Activated CD4-positive, alpha-beta T cell treated with anti-CD3 and anti-CD28 coated beads, Interleukin-2, amount 10 ng/mL, durations not matched to agents 24 days and 14 days (primary cell): ENCODE measurements at regions of chr1 and their contacts with region 1.

Region 1: GRCh38 chr1:211323156-211324063 is 3.2 kb upstream of the TRAF5 start:
- DNase-seq: peak; percentile 91
- H3K4me3 Mint-ChIP-seq: peak overlapping the region; percentile 15
- H3K27ac Mint-ChIP-seq: peak overlapping the region; percentile 88
- H3K4me1 Mint-ChIP-seq: peaks cover 57% of the 10 kb centered on the region
- H3K27me3 Mint-ChIP-seq: no peaks in the 10 kb centered on the region

Region 2: GRCh38 chr1:211198111-211198510 is 125.3 kb before region 1 on chr1:
- intact Hi-C with region 1: no loop called
- DNase-seq: no peak
- H3K4me3 Mint-ChIP-seq: no peak overlapping the region
- H3K27ac Mint-ChIP-seq: no peak overlapping the region
- H3K4me1 Mint-ChIP-seq: no peaks in the 10 kb centered on the region
- H3K27me3 Mint-ChIP-seq: peaks cover 7% of the 10 kb centered on the region

Region 3: DNA sequence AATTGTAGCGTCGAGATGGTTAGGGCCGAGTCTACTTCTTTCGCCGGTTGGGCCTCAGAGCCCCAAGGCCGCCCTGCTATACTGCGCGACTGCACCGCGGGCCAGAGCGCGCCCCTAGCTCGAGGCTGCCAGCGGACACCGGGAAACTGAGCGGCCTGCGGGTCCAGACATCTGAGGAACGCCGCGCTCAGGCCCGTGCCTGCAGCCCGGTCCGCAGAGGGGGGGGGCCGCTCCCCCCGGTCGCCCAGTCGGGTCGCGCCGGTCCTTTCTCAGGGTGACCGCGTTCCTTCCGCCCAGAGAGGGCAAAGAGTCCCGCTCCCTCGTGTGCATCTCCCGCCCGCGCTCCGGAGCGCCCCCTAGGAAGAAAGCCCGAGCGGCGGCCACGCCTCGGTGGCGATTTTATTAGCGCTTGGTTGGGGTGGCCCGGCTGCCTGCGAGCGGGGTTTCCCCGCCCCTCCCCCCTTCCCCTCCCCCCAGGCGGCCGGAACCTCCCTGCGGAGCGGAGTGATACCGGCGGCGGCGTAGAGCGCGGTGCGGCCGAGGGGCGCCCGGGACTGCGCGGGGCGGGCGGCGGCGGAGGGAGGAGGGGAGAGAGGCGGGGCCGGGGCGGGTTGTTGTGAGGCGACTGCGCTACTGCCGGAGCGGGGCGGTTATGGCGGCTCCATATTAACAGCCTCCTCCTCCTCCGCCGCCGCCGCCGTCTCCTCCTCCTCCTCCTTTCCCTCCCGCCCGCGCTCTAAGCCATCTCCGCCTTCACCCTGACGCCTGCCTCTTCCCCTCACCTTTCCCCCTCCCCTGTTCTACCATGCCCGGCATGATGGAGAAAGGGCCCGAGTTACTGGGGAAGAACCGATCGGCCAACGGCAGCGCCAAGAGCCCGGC is 64.4 kb before region 1 on chr1 and contains the start of gene RCOR3:
- intact Hi-C with region 1: loop called (anchors 1 kb)
- DNase-seq: peak; percentile 96
- H3K4me3 Mint-ChIP-seq: peak within 1 kb of the TSS; percentile 96
- H3K27ac Mint-ChIP-seq: peak within 1 kb of the TSS; percentile 97
- H3K4me1 Mint-ChIP-seq: peaks cover 13% of the 10 kb centered on the region
- H3K27me3 Mint-ChIP-seq: no peaks in the 10 kb centered on the region
- total RNA-seq, gene RCOR3: 38.0 and 39.8 TPM in 2 replicates

Region 4: DNA sequence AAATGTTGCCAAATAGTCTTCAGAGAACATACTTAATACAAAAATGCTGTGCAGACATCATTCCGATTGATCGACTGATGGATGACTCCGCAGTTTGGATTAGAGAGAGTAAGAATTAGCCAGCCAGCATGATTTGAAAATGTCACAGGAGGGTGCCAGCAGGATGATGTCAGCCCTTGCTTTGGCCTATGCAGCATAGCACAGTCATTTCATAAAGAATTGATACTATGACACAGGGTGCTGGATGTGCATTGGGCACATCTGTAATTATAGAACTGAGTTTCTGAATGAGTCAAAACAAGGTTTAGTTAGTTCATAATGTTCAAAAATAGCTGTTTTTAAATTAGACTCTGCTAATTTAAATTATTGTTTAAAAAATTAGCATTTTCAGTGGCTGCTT is 18.4 kb before region 1 on chr1:
- intact Hi-C with region 1: loop called (anchors 1 kb)
- DNase-seq: no peak
- H3K4me3 Mint-ChIP-seq: no peak overlapping the region
- H3K27ac Mint-ChIP-seq: peak overlapping the region; percentile 71
- H3K4me1 Mint-ChIP-seq: peaks cover 16% of the 10 kb centered on the region
- H3K27me3 Mint-ChIP-seq: no peaks in the 10 kb centered on the region

Region 5: GRCh38 chr1:211359876-211360275 is 36.5 kb after region 1 on chr1:
- intact Hi-C with region 1: no loop called
- DNase-seq: no peak
- H3K4me3 Mint-ChIP-seq: no peak overlapping the region
- H3K27ac Mint-ChIP-seq: peak overlapping the region; percentile 51
- H3K4me1 Mint-ChIP-seq: peaks cover 31% of the 10 kb centered on the region
- H3K27me3 Mint-ChIP-seq: no peaks in the 10 kb centered on the region

Region 6: DNA sequence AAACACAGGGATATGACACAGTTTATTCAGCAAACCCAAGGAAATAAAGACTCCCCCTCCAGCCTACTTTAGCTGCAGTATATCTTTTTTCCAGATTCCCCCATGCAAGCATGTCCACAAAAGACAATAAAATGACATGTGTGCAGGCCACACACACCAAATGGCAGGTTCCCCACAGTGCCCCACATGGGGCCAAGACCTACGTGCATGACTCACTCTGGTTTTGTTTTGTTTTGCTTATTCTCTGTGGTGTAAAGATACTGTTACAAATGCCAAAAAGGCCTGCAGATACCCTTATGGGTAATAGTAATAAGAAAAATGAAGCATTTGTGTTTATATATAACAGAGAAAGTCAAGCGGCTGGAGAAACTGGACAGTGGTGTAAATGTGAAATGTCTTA is 97.0 kb after region 1 on chr1:
- intact Hi-C with region 1: loop called (anchors 2 kb)
- DNase-seq: no peak
- H3K4me3 Mint-ChIP-seq: no peak overlapping the region
- H3K27ac Mint-ChIP-seq: peak overlapping the region; percentile 13
- H3K4me1 Mint-ChIP-seq: peaks cover 21% of the 10 kb centered on the region
- H3K27me3 Mint-ChIP-seq: peaks cover 3% of the 10 kb centered on the region

Region 7: GRCh38 chr1:211578640-211579433 is 255.4 kb after region 1 on chr1 and contains the start of gene SLC30A1:
- intact Hi-C with region 1: loop called (anchors 5 kb)
- DNase-seq: peak; percentile 100
- H3K4me3 Mint-ChIP-seq: peak within 1 kb of the TSS; percentile 92
- H3K27ac Mint-ChIP-seq: peak within 1 kb of the TSS; percentile 87
- H3K4me1 Mint-ChIP-seq: peaks cover 33% of the 10 kb centered on the region
- H3K27me3 Mint-ChIP-seq: peaks cover 4% of the 10 kb centered on the region
- total RNA-seq, gene SLC30A1: 8.5 and 9.0 TPM in 2 replicates